ENCODE measurements at regions of chr10 and their contacts with region 1.

Region 1: DNA sequence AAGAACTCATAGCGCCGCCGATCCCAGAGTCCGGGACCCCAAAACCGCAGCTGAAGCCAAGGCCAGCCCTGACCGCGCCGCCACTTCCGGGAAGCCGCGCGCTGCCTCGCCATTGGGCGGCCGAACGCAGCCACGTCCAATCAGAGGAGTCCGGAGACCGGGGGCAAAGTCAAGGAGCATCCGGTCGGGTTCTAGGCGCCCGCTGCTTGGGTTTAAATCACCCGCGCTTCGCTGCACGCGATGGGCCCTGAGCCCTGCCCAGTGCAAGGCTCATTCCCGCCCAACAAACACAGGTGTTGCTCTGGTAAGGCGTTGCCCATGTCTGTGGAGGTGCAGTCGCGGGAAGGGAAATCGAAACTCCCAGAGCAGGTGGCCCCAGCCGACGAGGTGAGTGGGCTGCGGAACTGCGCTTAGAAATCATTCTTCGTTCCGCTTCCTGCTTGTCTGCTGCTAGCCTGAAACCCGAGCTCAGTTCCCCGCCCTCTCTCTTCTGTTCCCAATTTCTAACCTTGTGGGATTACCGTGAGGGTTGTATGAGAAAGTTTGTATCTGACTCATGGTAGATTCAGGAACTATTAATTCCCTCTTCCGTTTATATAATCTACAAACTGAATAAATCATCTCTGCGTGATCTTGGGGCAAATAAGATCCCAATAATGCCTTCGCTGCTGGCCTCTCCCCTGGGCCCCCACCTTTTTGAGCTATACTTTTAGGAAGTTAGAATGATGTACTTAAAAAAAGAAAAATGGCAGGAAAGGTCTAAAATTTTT is at the start of gene DCLRE1C:
- DNase-seq: peak; percentile 85
- ATAC-seq: peak; percentile 90
- H3K4me3 Mint-ChIP-seq: peak within 1 kb of the TSS; percentile 80
- H3K27ac Mint-ChIP-seq: peak within 1 kb of the TSS; percentile 87
- H3K4me1 Mint-ChIP-seq: peaks cover 24% of the 10 kb centered on the region
- H3K27me3 Mint-ChIP-seq: peaks cover 70% of the 10 kb centered on the region
- CTCF ChIP-seq: no peak
- total RNA-seq, gene DCLRE1C: 4.3 to 8.5 TPM (median 4.6 TPM) in 3 replicates

Region 2: GRCh38 chr10:14837757-14838581 is 116.2 kb before region 1 on chr10 and contains the starts of genes CDNF, HSPA14 and MSANTD7:
- CTCF ChIA-PET with region 1: interaction called, 8 read pairs
- POLR2A ChIA-PET with region 1: interaction called, 15 read pairs
- DNase-seq: peak; percentile 99
- ATAC-seq: peak; percentile 97
- H3K4me3 Mint-ChIP-seq: peak within 1 kb of the TSS; percentile 91
- H3K27ac Mint-ChIP-seq: peak within 1 kb of the TSS; percentile 97
- H3K4me1 Mint-ChIP-seq: peaks cover 24% of the 10 kb centered on the region
- H3K27me3 Mint-ChIP-seq: no peaks in the 10 kb centered on the region
- CTCF ChIP-seq: no peak
- total RNA-seq, gene CDNF: 0.27 to 1.4 TPM (median 0.41 TPM) in 3 replicates
- total RNA-seq, gene HSPA14: 26.1 to 30.1 TPM (median 27.1 TPM) in 3 replicates
- total RNA-seq, gene MSANTD7: 13.9 to 14.6 TPM (median 14.3 TPM) in 3 replicates

Region 3: DNA sequence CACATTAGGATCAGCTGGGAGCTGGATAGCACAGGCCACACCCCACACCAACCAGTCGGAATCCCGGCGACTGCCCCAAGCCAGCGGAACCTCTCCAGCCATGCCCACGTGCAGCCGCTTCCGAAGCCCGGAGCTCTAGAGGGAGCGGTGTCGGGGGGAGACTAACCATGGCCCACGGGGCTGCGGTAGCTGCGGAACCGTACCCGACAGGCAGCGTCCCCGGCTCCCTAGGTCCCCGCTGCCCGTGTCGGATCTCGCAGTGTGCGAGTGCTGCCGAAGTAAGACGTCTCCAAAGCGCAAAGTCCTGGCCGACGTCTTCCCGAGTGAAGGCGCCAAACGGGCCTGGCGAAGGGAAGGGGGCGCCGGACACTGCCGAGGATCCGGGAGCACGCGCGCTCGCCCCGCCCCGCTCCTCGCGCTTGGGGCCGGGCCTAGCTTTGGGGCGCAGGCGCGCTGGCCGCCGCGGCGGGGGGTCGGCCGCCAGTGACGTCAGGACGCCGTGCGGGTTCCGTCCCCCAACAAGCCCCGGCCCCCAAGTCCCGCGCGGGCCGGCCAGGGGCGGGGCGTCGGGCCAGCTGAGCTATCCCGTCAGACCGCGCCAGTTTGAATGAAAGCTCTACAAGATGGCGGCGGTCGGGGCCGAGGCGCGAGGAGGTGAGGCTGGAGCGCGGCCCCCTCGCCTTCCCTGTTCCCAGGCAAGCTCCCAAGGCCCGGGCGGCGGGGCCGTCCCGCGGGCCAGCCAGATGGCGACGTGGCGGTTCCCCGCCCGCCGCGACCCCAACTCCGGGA is 75.7 kb before region 1 on chr10 and contains the start of gene SUV39H2:
- CTCF ChIA-PET with region 1: interaction called, 9 read pairs
- POLR2A ChIA-PET with region 1: interaction called, 12 read pairs
- DNase-seq: peak; percentile 95
- ATAC-seq: peak; percentile 80
- H3K4me3 Mint-ChIP-seq: peak within 1 kb of the TSS; percentile 94
- H3K27ac Mint-ChIP-seq: peak within 1 kb of the TSS; percentile 97
- H3K4me1 Mint-ChIP-seq: peaks cover 43% of the 10 kb centered on the region
- H3K27me3 Mint-ChIP-seq: no peaks in the 10 kb centered on the region
- CTCF ChIP-seq: no peak
- total RNA-seq, gene SUV39H2: 36.4 to 41.4 TPM (median 39.9 TPM) in 3 replicates

Region 4: GRCh38 chr10:15106352-15107013 is 152.3 kb after region 1 on chr10:
- CTCF ChIA-PET with region 1: interaction called, 10 read pairs
- POLR2A ChIA-PET with region 1: no interaction called
- DNase-seq: peak; percentile 85
- ATAC-seq: peak; percentile 100
- H3K4me3 Mint-ChIP-seq: no peak overlapping the region
- H3K27ac Mint-ChIP-seq: no peak overlapping the region
- H3K4me1 Mint-ChIP-seq: no peaks in the 10 kb centered on the region
- H3K27me3 Mint-ChIP-seq: no peaks in the 10 kb centered on the region
- CTCF ChIP-seq: peak; percentile 83

Measured in WTC11 (cell line).